GM10248 (cell line): ENCODE measurements at regions of chr5 and their contacts with region 1.

Region 1: GRCh38 chr5:171484460-171484899 is 65.0 kb downstream of the FGF18 start:
- DNase-seq: peak; percentile 72
- CTCF ChIP-seq: peak; percentile 63

Region 2: GRCh38 chr5:171474230-171474813 is 10.2 kb before region 1 on chr5:
- CTCF ChIA-PET with region 1: interaction called, 40 read pairs
- POLR2A ChIA-PET with region 1: no interaction called
- DNase-seq: no peak
- CTCF ChIP-seq: no peak